T-cell (primary cell): ENCODE measurements at regions of chrX and their contacts with region 1.

Region 1: GRCh38 chrX:76427560-76428242 is at the start of gene MAGEE1:
- DNase-seq: peak; percentile 67 to 88 (median 79)
- ATAC-seq: peak; percentile 76 to 81 (median 80)
- H3K4me3 ChIP-seq: peak within 1 kb of the TSS; percentile 74 to 92
- H3K4me3 Mint-ChIP-seq: peak within 1 kb of the TSS; percentile 87 to 89 (median 89)
- H3K27ac ChIP-seq: peak within 1 kb of the TSS; percentile 74
- H3K27ac Mint-ChIP-seq: peak within 1 kb of the TSS; percentile 87 to 89
- H3K4me1 ChIP-seq: peaks cover 7 to 27% of the 10 kb centered on the region in 2 experiments
- H3K4me1 Mint-ChIP-seq: peaks cover 29 to 44% (median 42%) of the 10 kb centered on the region in 3 donors
- H3K27me3 ChIP-seq: no peaks in the 10 kb centered on the region
- H3K27me3 Mint-ChIP-seq: peaks cover 0 to 8% of the 10 kb centered on the region in 2 donors
- total RNA-seq, gene MAGEE1: 9.8 to 15.5 (median 10.2) TPM

Region 2: DNA sequence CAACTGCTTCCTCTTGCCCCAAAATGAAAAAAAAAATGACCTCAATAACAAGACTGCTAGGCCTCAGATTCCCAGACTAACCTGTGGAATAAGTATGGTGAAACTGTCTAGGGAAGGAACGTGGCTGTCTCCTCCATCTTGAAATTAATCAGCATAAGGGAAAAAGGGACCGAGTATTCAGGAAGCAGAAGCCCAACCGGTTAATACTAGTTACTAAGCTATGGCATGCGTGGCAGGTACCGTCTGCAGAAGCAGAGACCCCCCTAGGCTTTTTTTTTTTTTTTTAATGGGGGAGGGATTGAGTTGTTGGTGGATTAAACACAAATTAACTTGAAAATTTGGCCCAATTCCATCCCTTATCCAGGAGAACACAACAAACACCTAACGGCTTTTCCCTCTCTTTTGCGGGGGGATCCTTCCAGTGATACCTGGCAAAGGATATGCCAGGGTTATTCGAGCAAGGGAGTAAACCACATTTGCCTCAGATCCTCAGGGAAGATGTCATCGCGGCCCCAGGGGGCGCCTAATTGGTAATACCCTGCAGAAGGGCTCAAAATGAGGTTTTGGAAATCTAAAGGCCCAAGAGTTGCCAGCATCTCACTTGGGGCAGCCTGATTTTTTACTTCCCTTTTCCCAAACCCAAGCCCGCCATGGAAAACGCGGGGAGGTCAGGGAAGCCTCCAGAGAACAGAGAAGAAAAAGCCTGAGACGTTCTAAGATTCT is 1814.2 kb before region 1 on chrX:
- CTCF ChIA-PET with region 1: no interaction called
- POLR2A ChIA-PET with region 1: interaction called in 1 of 2 experiments, 13 read pairs
- DNase-seq: peak in 4 of 35 experiments; percentile 1 to 27 (median 2)
- ATAC-seq: no peak
- H3K4me3 ChIP-seq: peak overlapping the region; percentile 68 to 69
- H3K4me3 Mint-ChIP-seq: peak overlapping the region; percentile 97 to 99 (median 99)
- H3K27ac ChIP-seq: peak overlapping the region; percentile 95
- H3K27ac Mint-ChIP-seq: peak overlapping the region; percentile 99
- H3K4me1 ChIP-seq: peaks cover 2 to 4% of the 10 kb centered on the region in 2 experiments
- H3K4me1 Mint-ChIP-seq: peaks cover 22 to 37% (median 30%) of the 10 kb centered on the region in 3 donors
- H3K27me3 ChIP-seq: no peaks in the 10 kb centered on the region
- H3K27me3 Mint-ChIP-seq: peaks cover 0 to 3% of the 10 kb centered on the region in 2 donors

Region 3: GRCh38 chrX:75096331-75096730 is 1331.4 kb before region 1 on chrX:
- CTCF ChIA-PET with region 1: no interaction called
- POLR2A ChIA-PET with region 1: interaction called in 1 of 2 experiments, 13 read pairs
- DNase-seq: no peak
- ATAC-seq: no peak
- H3K4me3 ChIP-seq: no peak overlapping the region
- H3K4me3 Mint-ChIP-seq: no peak overlapping the region
- H3K27ac ChIP-seq: no peak overlapping the region
- H3K27ac Mint-ChIP-seq: no peak overlapping the region
- H3K4me1 ChIP-seq: no peaks in the 10 kb centered on the region
- H3K4me1 Mint-ChIP-seq: peaks cover 0 to 22% (median 9%) of the 10 kb centered on the region in 3 donors
- H3K27me3 ChIP-seq: no peaks in the 10 kb centered on the region
- H3K27me3 Mint-ChIP-seq: no peaks in the 10 kb centered on the region